Cardiac septum (tissue), 1 donor: ENCODE measurements at regions of chr7 and their contacts with region 1.

Region 1: DNA sequence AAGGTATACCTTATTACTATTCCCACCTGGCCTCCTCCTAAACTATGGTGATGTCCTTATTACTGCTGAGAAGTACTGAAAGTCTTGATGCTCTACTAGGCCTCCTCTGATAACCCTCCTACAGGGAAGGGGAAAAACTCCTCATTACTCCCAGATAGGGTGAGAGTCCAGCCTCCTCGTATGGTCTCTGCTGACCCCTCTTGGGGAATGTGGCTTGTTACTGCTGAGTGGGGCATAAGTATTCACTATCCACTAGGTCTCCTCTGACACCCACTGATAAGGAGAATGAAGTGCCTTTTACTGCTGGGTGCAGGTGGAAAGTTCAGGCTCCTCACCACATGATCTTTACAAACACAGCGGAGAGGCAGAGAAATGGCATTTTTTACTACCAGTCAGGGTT is 222.9 kb downstream of the CHRM2 start:
- DNase-seq: no peak

Region 2: GRCh38 chr7:136405931-136406777 is 685.2 kb before region 1 on chr7:
- intact Hi-C with region 1: loop called (anchors 10 kb)
- DNase-seq: no peak

Region 3: GRCh38 chr7:137151041-137151689 is 59.8 kb after region 1 on chr7:
- intact Hi-C with region 1: no loop called
- DNase-seq: no peak

Region 4: DNA sequence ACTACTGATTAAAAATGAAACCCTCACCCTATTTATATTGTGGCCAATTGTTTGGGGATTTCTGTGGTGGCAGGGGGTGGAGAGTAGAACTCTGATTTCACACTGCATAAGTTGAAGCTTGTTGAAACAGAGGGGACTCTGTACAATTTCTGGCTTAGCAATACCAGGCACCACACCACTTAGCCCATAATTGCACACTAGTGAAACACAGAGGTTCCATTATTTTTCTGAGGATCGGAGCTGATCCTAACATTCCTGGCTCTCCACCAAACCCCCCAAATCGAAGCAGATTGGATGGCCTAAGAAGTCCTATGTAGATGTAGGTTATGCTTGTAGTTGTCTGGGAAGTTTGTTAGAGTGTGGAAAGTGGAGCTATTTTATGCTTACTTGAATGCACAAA is 205.2 kb after region 1 on chr7:
- intact Hi-C with region 1: no loop called
- DNase-seq: no peak

Region 5: GRCh38 chr7:137443616-137444015 is 352.2 kb after region 1 on chr7:
- intact Hi-C with region 1: loop called (anchors 10 kb)
- DNase-seq: no peak